ENCODE measurements at regions of chr1 and their contacts with region 1.

Region 1: DNA sequence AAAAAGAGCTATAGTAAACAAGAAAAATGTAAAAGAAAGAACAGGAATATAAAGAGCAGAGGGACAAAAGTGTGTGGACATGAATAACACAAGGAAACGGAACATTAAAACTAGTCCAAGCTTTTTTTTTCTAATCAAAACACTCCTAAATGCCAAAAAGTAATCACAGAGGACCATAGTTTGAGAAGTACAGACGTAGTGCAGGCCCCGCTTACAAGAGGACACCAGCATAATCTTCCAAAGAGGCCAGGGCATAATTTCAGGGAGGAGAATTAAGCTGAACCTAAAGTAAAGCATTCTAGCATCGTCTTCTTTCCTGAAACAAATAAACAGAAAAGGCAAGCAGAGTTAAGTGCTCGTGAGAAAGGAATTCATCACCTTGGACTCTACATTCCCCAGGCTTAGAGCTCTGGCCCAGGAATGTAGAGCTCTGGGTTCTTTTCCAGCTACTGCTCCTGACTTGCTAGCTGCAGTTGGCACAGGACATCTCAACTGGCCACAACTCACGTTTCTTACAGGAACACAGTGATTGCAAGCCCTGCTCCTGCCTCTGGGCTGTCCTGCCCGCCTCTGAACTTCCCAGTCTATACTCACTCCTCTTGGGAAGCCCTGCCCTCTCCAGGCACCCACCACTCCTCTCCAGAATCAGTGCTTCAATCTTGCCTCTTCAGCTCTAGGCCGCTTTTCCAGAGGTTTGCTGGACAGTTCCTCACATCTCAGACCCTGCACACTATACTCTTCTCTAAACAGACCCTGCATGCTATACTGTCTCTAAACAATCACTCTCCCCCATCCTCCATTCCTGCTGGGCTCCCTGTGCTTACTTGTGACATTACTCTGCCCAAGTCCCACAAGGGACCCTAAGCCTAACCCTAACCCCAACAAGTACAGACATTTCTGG is 9.8 kb downstream of the RGS8 start:
- DNase-seq: peak in 1 of 2 donors; percentile 84
- H3K4me3 ChIP-seq: peak overlapping the region in 1 of 2 donors; percentile 22
- H3K27ac ChIP-seq: peak overlapping the region; percentile 62 to 77
- H3K4me1 ChIP-seq: peaks cover 0 to 8% of the 10 kb centered on the region in 2 donors
- H3K27me3 ChIP-seq: no peaks in the 10 kb centered on the region
- CTCF ChIP-seq: no peak

Region 2: GRCh38 chr1:182614796-182615454 is 59.7 kb before region 1 on chr1:
- intact Hi-C with region 1: loop called (anchors 2 kb)
- DNase-seq: peak; percentile 73 to 93
- H3K4me3 ChIP-seq: peak overlapping the region; percentile 55 to 61
- H3K27ac ChIP-seq: peak overlapping the region; percentile 93 to 96
- H3K4me1 ChIP-seq: peaks cover 23 to 36% of the 10 kb centered on the region in 2 donors
- H3K27me3 ChIP-seq: no peaks in the 10 kb centered on the region
- CTCF ChIP-seq: no peak

Region 3: GRCh38 chr1:182781841-182782586 is 107.4 kb after region 1 on chr1:
- intact Hi-C with region 1: loop called (anchors 5 kb)
- DNase-seq: peak; percentile 14 to 84
- H3K4me3 ChIP-seq: no peak overlapping the region
- H3K27ac ChIP-seq: no peak overlapping the region
- H3K4me1 ChIP-seq: no peaks in the 10 kb centered on the region
- H3K27me3 ChIP-seq: no peaks in the 10 kb centered on the region
- CTCF ChIP-seq: peak; percentile 33 to 63 (median 55)

Measured in ascending aorta (tissue), 2 donors.